ENCODE measurements at regions of chr2 and their contacts with region 1.

Region 1: DNA sequence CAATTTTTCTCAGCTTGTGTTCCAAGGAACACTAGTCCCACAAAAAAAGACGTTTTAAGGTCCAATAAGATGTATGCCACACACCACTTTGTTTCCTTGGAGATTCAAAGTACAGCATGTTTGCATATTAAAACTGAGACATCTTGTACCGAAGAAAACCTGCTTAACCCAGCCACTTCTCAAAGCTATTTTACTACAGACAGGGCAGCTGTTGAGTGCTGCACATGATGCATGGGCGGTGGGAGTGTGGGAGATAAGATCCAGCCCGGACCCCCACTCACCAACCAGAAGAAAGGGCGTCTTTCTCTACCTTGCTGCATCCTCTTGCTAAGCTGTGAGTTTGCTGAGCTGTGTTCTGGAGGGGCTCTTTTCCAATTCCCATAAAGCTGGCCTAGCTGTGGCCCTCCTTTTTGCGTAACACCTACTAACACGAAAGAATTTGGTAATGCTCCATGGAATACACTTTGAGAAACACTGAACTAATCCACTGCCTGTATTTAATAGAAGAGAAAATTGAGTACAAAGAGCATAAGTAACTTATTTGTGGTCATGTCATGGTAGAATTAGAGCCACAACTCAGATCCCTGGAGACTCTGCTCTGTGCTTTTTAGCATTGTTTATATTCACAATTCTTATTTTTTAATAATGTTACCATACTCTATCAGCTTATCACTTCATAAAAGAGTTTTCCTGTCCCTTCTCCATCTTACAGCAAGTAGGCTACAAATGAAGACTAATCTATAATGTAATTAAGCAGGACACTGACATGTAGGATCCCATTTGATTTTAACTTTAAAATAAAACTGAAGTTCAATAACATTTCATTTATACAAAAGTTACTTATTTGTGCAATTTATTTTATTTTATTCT is 90.0 kb downstream of the PLEKHM3 start:
- DNase-seq: no peak
- H3K4me3 Mint-ChIP-seq: no peak overlapping the region
- H3K27ac Mint-ChIP-seq: no peak overlapping the region
- H3K4me1 Mint-ChIP-seq: peaks cover 27% of the 10 kb centered on the region
- H3K27me3 Mint-ChIP-seq: no peaks in the 10 kb centered on the region
- CTCF ChIP-seq: no peak

Region 2: DNA sequence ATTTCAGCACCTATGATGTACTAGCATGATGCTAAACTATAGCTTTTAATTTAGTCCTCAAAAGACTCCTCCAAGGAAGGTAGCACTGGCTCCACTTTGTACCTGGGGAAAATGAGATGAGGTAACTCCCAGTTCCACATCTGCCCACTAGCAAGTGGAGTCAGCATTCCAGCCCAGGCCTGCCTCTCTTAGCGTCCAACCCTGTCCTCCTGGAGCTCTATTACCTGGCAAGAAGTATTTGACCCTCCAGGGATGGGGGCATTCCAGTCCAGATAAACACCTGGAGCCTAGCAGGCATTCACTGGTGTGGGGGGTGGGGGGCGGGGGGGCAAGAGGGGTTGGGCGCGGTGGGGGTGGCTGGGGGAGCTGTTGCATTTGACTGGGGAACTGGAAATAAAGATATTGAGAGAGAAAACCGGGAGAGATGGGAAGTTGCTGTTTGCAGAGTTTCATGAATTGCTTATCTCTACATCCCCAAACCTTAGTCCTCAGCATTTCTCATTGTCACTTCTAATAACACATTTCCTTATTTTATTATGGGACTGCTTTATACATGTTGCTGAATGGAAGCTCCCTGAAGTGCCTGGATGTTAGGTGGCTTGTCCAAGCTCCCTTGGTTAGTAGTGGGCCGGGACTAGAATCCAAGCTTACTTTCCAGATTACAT is 143.6 kb before region 1 on chr2:
- CTCF ChIA-PET with region 1: interaction called, 11 read pairs
- intact Hi-C with region 1: no loop called
- DNase-seq: no peak
- H3K4me3 Mint-ChIP-seq: no peak overlapping the region
- H3K27ac Mint-ChIP-seq: no peak overlapping the region
- H3K4me1 Mint-ChIP-seq: peaks cover 16% of the 10 kb centered on the region
- H3K27me3 Mint-ChIP-seq: no peaks in the 10 kb centered on the region
- CTCF ChIP-seq: no peak

Region 3: DNA sequence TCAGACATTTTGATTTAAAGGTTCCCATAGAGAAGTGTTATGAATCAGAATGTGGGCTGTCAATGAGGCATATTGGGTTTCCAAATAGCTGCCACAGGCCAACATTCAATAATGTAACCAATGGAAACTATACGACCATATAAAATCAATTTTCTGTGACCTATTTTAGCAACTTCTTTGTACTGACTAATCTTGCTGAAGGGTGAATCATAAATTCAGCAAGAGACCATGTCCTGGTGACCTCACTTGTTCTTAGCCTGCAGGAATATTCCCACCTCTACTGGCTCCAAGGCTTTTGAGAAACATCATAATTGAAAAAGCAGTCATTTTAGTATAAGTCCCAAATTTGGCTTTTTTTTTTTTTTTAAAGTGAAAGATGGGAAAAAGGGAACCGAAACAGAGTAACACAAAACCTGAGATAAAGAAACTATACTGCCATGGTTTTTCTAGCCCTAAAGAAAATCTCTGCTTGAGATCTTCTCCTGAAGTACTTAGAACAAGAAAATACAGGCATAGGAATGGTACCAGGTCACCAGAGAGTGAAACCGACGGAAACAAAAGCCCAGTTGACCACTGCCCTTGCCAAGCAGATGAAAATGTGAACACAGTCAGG is 57.9 kb after region 1 on chr2:
- CTCF ChIA-PET with region 1: no interaction called
- intact Hi-C with region 1: no loop called
- DNase-seq: no peak
- H3K4me3 Mint-ChIP-seq: no peak overlapping the region
- H3K27ac Mint-ChIP-seq: no peak overlapping the region
- H3K4me1 Mint-ChIP-seq: no peaks in the 10 kb centered on the region
- H3K27me3 Mint-ChIP-seq: no peaks in the 10 kb centered on the region
- CTCF ChIP-seq: no peak